ENCODE measurements at regions of chr1 and their contacts with region 1.

Region 1: DNA sequence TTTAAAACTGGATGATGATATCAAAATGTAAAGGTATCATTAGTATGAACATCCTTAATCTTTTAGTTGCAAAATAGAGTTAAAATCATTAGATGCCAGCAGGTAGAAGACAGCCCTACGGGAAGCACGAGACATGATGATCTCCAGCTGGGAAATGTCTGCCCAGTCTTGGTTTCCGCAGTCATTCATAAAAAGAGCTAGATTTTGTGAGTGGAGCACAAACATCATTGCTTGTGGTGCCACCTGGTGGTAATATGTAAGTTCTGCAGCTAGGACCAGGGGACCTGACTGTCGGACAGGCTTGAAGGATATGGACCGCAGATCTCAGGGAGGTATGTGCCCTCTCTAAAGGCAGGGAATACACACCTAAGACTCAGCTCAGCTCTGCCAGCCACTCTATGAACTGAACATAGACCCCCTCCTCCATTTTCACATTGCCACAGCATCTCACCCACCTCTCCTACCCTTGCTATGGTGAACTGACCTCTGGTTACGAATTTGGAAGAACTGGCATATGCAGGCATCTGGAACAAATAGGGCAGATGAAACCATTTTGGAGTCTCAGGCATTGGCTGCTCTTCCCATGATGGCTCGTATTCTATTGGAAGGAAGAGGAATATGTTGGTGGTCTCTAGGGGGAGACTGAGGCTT is 9.2 kb downstream of the FCMR start:
- H3K4me3 ChIP-seq: no peak overlapping the region
- H3K27ac ChIP-seq: no peak overlapping the region
- H3K4me1 ChIP-seq: no peaks in the 10 kb centered on the region
- CTCF ChIP-seq: peak; percentile 56

Region 2: DNA sequence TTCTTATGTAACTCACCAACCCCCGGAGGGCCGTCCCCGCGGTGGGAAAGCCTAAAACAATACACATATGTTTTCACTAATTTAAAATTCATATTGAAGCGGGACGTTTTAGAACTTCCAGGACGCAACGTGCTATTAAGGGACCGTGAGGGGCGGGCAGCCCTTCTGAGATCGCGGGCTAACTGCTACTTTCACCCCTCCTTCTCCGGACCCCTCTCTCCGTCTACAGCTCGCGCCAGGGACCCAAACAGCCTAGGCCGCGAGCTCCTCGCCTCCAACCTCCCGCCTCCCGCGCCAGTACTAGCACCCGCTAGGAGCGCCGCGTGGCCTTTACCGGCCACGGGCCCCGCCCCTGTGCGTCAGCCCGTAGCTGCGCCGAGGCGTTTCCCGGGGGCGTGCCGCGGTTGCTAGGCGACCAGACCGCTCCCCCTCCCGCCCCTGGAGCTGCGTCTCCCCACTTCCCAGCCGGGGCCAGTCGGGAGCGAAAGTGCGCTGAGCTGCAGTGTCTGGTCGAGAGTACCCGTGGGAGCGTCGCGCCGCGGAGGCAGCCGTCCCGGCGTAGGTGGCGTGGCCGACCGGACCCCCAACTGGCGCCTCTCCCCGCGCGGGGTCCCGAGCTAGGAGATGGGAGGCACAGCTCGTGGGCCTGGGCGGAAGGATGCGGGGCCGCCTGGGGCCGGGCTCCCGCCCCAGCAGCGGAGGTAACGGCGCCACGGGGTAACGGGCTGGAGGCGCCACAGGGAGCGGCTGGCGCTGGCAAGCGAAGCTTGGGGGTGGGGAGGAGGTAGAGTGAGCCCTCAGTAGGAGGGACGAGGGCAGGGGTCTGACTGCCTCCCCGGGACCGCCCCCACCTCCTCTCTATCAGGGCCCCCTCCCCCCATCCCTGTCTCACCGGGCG is 277.2 kb before region 1 on chr1 and contains the start of gene DYRK3:
- CTCF ChIA-PET with region 1: interaction called, 23 read pairs
- POLR2A ChIA-PET with region 1: no interaction called
- H3K4me3 ChIP-seq: peak within 1 kb of the TSS; percentile 88
- H3K27ac ChIP-seq: peak within 1 kb of the TSS; percentile 56; the same call in 1 of the 2 replicates
- H3K4me1 ChIP-seq: peaks cover 11% of the 10 kb centered on the region
- CTCF ChIP-seq: peak; percentile 70

Region 3: GRCh38 chr1:206734499-206735142 is 177.9 kb before region 1 on chr1:
- CTCF ChIA-PET with region 1: interaction called, 73 read pairs
- POLR2A ChIA-PET with region 1: interaction called, 3 read pairs
- H3K4me3 ChIP-seq: no peak overlapping the region
- H3K27ac ChIP-seq: no peak overlapping the region
- H3K4me1 ChIP-seq: no peaks in the 10 kb centered on the region
- CTCF ChIP-seq: peak; percentile 53

Region 4: DNA sequence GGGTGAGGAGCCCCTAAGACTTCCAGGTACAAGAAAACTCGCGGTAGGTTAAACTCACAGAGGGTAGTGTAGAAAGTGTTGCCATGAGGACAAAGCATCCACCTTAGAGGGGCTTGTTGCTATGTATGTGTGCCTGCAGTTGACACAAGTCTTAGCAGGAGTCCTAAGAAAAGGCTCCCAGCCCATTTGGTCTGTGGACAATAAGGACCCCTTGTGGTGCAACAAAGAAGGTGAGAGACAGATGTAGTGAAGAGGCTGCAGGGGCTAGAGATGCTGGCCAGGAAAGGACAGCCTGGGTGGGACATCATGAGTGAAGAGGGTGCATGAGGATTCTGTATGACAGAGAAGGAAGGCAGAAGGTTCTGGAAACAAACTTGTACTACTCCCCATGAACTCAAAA is 104.0 kb before region 1 on chr1:
- CTCF ChIA-PET with region 1: interaction called, 56 read pairs
- POLR2A ChIA-PET with region 1: no interaction called
- H3K4me3 ChIP-seq: no peak overlapping the region
- H3K27ac ChIP-seq: no peak overlapping the region
- H3K4me1 ChIP-seq: no peaks in the 10 kb centered on the region
- CTCF ChIP-seq: no peak; the same call in 1 of the 2 replicates

Region 5: DNA sequence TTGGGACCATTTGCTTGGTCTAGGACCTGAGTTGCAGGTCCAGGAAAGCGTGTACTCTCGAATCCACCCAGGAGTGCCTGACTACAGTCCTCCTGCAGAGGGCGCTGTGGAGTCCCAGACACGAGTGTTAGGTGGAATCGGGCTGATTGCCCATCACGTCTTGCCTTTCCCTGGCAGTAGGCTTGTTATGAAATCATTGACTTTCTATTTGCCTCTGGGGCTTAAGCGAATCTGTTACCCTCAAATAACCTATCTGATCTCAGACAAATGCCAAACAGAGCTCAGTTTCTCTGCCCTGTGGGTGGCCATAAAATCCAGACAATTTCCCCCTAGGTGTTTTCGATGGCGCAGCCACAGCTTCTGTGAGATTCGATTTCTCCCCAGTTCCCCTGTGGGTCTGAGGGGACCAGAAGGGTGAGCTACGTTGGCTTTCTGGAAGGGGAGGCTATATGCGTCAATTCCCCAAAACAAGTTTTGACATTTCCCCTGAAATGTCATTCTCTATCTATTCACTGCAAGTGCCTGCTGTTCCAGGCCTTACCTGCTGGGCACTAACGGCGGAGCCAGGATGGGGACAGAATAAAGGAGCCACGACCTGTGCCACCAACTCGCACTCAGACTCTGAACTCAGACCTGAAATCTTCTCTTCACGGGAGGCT is 47.4 kb before region 1 on chr1 and contains the start of gene IL20:
- CTCF ChIA-PET with region 1: interaction called, 22 read pairs
- POLR2A ChIA-PET with region 1: no interaction called
- H3K4me3 ChIP-seq: no peak within 1 kb of the TSS
- H3K27ac ChIP-seq: no peak within 1 kb of the TSS
- H3K4me1 ChIP-seq: no peaks in the 10 kb centered on the region
- CTCF ChIP-seq: peak; percentile 68

Region 6: DNA sequence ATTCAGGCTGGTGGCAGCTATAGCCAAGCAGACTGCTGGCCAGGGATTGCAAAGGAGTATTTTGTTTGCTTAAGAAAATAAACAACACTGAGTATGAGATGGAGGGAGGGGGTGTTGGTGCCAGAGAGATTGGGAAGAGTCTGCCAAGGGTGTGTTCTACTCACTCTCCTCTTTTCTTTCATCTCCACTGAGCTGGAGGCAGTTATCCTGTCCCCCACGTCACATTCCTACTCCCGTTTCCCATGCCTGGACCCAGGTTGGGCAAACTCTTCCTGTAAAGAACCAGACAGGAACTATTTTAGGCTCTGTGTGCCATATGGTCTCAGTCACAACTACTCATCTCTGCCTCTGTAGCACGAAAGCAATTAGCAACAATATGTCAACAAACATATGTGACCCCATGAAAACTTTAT is 16.7 kb before region 1 on chr1:
- CTCF ChIA-PET with region 1: interaction called, 17 read pairs
- POLR2A ChIA-PET with region 1: interaction called, 3 read pairs
- H3K4me3 ChIP-seq: no peak overlapping the region
- H3K27ac ChIP-seq: no peak overlapping the region
- H3K4me1 ChIP-seq: no peaks in the 10 kb centered on the region; the same call in 1 of the 2 replicates
- CTCF ChIP-seq: no peak

Region 7: GRCh38 chr1:206982216-206982615 is 69.6 kb after region 1 on chr1:
- CTCF ChIA-PET with region 1: interaction called, 70 read pairs
- POLR2A ChIA-PET with region 1: no interaction called
- H3K4me3 ChIP-seq: no peak overlapping the region
- H3K27ac ChIP-seq: no peak overlapping the region
- H3K4me1 ChIP-seq: no peaks in the 10 kb centered on the region
- CTCF ChIP-seq: peak; percentile 63